Naive thymus-derived CD4-positive, alpha-beta T cell (primary cell): ENCODE measurements at regions of chr10 and their contacts with region 1.

Region 1: GRCh38 chr10:102245101-102245931 is at the start of gene GBF1:
- DNase-seq: peak; percentile 69 to 97 (median 96)
- ATAC-seq: peak; percentile 92
- H3K4me3 ChIP-seq: peak within 1 kb of the TSS; percentile 84
- H3K4me3 Mint-ChIP-seq: peak within 1 kb of the TSS; percentile 83 to 100 (median 97)
- H3K27ac ChIP-seq: peak within 1 kb of the TSS; percentile 90
- H3K27ac Mint-ChIP-seq: peak within 1 kb of the TSS; percentile 65 to 98 (median 95)
- H3K4me1 ChIP-seq: peaks cover 17 to 37% of the 10 kb centered on the region in 2 donors
- H3K4me1 Mint-ChIP-seq: peaks cover 43 to 69% (median 54%) of the 10 kb centered on the region in 7 donors
- H3K27me3 ChIP-seq: peaks cover 0 to 16% of the 10 kb centered on the region in 2 donors
- H3K27me3 Mint-ChIP-seq: peaks cover 14 to 27% (median 22%) of the 10 kb centered on the region in 5 donors
- total RNA-seq, gene GBF1: 36.2 to 47.2 (median 37.8) TPM

Region 2: GRCh38 chr10:101693978-101694673 is 551.2 kb before region 1 on chr10:
- CTCF ChIA-PET with region 1: no interaction called
- POLR2A ChIA-PET with region 1: no interaction called
- intact Hi-C with region 1: loop called in 1 of 2 experiments (anchors 5 kb)
- DNase-seq: peak; percentile 60 to 81 (median 73)
- ATAC-seq: peak; percentile 77
- H3K4me3 ChIP-seq: peak overlapping the region; percentile 57
- H3K4me3 Mint-ChIP-seq: peak overlapping the region; percentile 93 to 98 (median 96)
- H3K27ac ChIP-seq: peak overlapping the region; percentile 99
- H3K27ac Mint-ChIP-seq: peak overlapping the region; percentile 94 to 100 (median 99)
- H3K4me1 ChIP-seq: peaks cover 21 to 28% of the 10 kb centered on the region in 2 donors
- H3K4me1 Mint-ChIP-seq: peaks cover 33 to 59% (median 45%) of the 10 kb centered on the region in 7 donors
- H3K27me3 ChIP-seq: no peaks in the 10 kb centered on the region
- H3K27me3 Mint-ChIP-seq: no peaks in the 10 kb centered on the region

Region 3: DNA sequence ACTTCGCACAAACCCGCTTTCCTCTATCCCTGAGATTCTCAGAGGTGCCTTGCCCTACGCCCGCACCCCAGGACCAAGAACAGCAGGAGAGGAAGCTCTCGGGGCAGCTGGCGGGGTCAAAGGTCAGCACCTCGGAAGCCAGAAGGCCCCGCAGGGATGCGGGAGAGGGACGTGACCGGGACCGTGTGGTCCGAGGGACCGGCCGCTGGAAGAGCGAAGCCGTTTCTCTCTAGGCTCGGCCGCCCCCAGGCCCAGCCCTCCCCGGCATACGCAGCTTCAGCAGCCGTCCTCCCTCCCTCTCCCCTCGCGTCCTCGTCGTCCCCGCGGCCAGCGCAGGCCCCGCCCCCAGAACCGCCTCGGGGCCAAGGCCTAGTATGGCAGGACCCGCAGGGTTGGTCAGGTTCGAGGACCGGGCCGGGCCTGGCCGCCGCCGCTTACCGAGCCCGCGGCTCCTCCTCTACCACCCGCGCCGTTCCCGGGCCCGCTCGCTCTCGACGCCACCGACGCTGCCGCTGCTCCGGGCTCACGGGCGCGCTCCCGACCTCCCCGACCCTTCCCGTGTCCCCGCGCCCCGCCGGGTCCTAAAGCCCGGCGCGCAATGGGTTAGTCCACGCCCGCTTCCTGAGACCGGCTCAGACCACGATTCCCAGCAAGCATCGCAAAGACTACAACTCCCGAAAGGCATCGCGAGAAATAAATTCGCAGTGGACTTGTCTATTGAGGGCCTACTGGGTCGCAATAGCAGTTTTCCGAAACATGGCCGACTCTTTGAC is 189.5 kb before region 1 on chr10 and contains the start of gene ARMH3:
- CTCF ChIA-PET with region 1: no interaction called
- POLR2A ChIA-PET with region 1: no interaction called
- intact Hi-C with region 1: loop called in 1 of 2 experiments (anchors 1 kb)
- DNase-seq: peak; percentile 72 to 90 (median 87)
- ATAC-seq: peak; percentile 98
- H3K4me3 ChIP-seq: peak within 1 kb of the TSS; percentile 92
- H3K4me3 Mint-ChIP-seq: peak within 1 kb of the TSS; percentile 89 to 98 (median 94)
- H3K27ac ChIP-seq: peak within 1 kb of the TSS; percentile 87
- H3K27ac Mint-ChIP-seq: peak within 1 kb of the TSS; percentile 76 to 97 (median 92)
- H3K4me1 ChIP-seq: peaks cover 18 to 20% of the 10 kb centered on the region in 2 donors
- H3K4me1 Mint-ChIP-seq: peaks cover 25 to 50% (median 42%) of the 10 kb centered on the region in 7 donors
- H3K27me3 ChIP-seq: no peaks in the 10 kb centered on the region
- H3K27me3 Mint-ChIP-seq: no peaks in the 10 kb centered on the region
- total RNA-seq, gene ARMH3: 26.7 to 34.0 (median 28.8) TPM

Region 4: GRCh38 chr10:102225646-102226541 is 19.4 kb before region 1 on chr10 and contains the start of gene ELOVL3:
- CTCF ChIA-PET with region 1: interaction called, 10 read pairs
- POLR2A ChIA-PET with region 1: interaction called, 4 read pairs
- intact Hi-C with region 1: loop called (anchors 1 kb)
- DNase-seq: peak; percentile 56 to 83 (median 79)
- ATAC-seq: peak; percentile 95
- H3K4me3 ChIP-seq: peak within 1 kb of the TSS; percentile 26
- H3K4me3 Mint-ChIP-seq: peak within 1 kb of the TSS; percentile 72 to 95 (median 80)
- H3K27ac ChIP-seq: no peak within 1 kb of the TSS
- H3K27ac Mint-ChIP-seq: peak within 1 kb of the TSS in 5 of 9 donors; percentile 14 to 78 (median 74)
- H3K4me1 ChIP-seq: peaks cover 20 to 22% of the 10 kb centered on the region in 2 donors
- H3K4me1 Mint-ChIP-seq: peaks cover 14 to 23% (median 21%) of the 10 kb centered on the region in 7 donors
- H3K27me3 ChIP-seq: peaks cover 3 to 5% of the 10 kb centered on the region in 2 donors
- H3K27me3 Mint-ChIP-seq: peaks cover 36 to 74% (median 39%) of the 10 kb centered on the region in 5 donors
- total RNA-seq, gene ELOVL3: not detected

Region 5: DNA sequence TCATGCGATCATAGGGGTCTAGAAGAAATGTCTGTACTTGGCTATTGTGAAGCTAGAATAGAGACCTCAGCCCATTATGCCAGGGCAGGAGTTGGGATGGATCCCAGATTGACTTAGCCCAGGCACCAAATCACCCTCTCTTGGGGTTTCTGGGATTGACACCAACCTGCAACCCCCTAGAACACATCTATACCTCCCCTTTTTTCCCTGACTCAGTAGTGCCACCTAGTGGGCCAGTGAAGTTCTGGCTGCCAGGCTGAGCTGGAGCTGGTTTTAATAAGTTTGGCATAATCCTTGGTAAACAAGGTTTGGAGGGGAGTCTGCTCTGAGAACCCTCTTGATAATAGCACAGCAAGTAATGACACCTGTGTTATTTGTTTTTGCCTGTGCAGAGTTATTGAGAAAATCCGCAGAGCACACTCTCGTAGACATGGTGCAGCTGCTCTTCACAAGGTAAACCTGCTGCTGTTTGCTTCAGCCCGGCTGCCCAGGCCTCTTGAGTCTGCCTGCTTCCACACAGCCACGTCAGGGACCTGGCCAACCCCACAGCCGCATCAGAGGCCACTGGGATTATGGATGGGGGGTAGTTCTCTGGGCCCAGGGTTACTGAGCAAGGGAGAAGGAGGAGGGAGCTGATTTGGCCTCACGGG is 106.9 kb after region 1 on chr10:
- CTCF ChIA-PET with region 1: interaction called, 3 read pairs
- POLR2A ChIA-PET with region 1: no interaction called
- intact Hi-C with region 1: loop called in 1 of 2 experiments (anchors 5 kb)
- DNase-seq: peak; percentile 41 to 75 (median 64)
- ATAC-seq: peak; percentile 85
- H3K4me3 ChIP-seq: no peak overlapping the region
- H3K4me3 Mint-ChIP-seq: no peak overlapping the region
- H3K27ac ChIP-seq: no peak overlapping the region
- H3K27ac Mint-ChIP-seq: no peak overlapping the region
- H3K4me1 ChIP-seq: no peaks in the 10 kb centered on the region
- H3K4me1 Mint-ChIP-seq: peaks cover 0 to 3% (median 0%) of the 10 kb centered on the region in 7 donors
- H3K27me3 ChIP-seq: no peaks in the 10 kb centered on the region
- H3K27me3 Mint-ChIP-seq: no peaks in the 10 kb centered on the region

Region 6: DNA sequence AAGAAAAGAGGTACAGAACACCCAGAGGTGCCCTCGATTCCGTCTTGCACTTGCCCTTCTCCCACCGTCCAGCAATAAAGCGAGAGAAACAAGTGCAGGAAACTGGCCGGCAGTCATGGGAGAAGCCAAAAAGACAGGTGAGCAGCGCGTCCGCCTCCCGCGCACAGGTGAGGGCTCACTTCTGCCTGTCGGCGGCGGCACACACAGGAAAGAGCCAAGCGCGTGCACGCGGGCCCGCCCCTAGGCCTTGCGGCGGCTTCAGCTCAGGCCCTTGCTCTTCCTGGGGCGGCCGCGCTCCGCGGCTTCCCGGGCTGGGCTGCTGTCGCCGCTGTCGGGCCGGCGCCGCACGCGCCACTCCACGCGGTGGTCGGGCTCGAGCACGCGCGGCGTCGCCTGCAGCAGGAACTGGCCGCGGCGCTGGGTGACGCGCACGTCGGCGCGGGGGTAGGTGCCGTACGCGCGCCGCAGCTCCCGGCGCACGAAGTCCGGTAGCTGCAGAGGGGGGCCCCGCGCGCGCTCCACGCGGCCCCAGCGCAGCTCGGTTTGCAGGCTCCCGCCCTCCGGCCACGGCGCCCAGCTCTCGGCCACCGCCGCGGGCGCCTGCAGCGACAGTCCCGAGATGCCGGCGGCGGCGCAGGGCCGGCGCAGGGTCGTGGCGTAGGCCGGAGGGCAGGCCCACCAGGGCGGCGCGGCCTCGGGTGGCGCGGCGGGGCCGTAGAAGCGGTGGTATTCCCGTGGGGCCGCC is 205.1 kb after region 1 on chr10:
- CTCF ChIA-PET with region 1: no interaction called
- POLR2A ChIA-PET with region 1: no interaction called
- intact Hi-C with region 1: loop called in 1 of 2 experiments (anchors 1 kb)
- DNase-seq: peak; percentile 85 to 95 (median 92)
- ATAC-seq: peak; percentile 90
- H3K4me3 ChIP-seq: peak overlapping the region; percentile 88
- H3K4me3 Mint-ChIP-seq: peak overlapping the region; percentile 89 to 97 (median 94)
- H3K27ac ChIP-seq: peak overlapping the region; percentile 90
- H3K27ac Mint-ChIP-seq: peak overlapping the region; percentile 81 to 97 (median 95)
- H3K4me1 ChIP-seq: peaks cover 12 to 14% of the 10 kb centered on the region in 2 donors
- H3K4me1 Mint-ChIP-seq: peaks cover 14 to 37% (median 27%) of the 10 kb centered on the region in 7 donors
- H3K27me3 ChIP-seq: no peaks in the 10 kb centered on the region
- H3K27me3 Mint-ChIP-seq: no peaks in the 10 kb centered on the region

Region 7: GRCh38 chr10:102743588-102744373 is 498.5 kb after region 1 on chr10 and contains the start of gene WBP1L:
- CTCF ChIA-PET with region 1: no interaction called
- POLR2A ChIA-PET with region 1: no interaction called
- intact Hi-C with region 1: loop called (anchors 1 kb)
- DNase-seq: peak; percentile 77 to 98 (median 96)
- ATAC-seq: peak; percentile 98
- H3K4me3 ChIP-seq: peak within 1 kb of the TSS; percentile 85
- H3K4me3 Mint-ChIP-seq: peak within 1 kb of the TSS; percentile 80 to 97 (median 93)
- H3K27ac ChIP-seq: peak within 1 kb of the TSS; percentile 77
- H3K27ac Mint-ChIP-seq: peak within 1 kb of the TSS; percentile 57 to 96 (median 90)
- H3K4me1 ChIP-seq: peaks cover 17 to 25% of the 10 kb centered on the region in 2 donors
- H3K4me1 Mint-ChIP-seq: peaks cover 33 to 59% (median 48%) of the 10 kb centered on the region in 7 donors
- H3K27me3 ChIP-seq: no peaks in the 10 kb centered on the region
- H3K27me3 Mint-ChIP-seq: no peaks in the 10 kb centered on the region
- total RNA-seq, gene WBP1L: 20.5 to 37.9 (median 34.1) TPM